ENCODE measurements at regions of chr7 and their contacts with region 1.

Region 1: DNA sequence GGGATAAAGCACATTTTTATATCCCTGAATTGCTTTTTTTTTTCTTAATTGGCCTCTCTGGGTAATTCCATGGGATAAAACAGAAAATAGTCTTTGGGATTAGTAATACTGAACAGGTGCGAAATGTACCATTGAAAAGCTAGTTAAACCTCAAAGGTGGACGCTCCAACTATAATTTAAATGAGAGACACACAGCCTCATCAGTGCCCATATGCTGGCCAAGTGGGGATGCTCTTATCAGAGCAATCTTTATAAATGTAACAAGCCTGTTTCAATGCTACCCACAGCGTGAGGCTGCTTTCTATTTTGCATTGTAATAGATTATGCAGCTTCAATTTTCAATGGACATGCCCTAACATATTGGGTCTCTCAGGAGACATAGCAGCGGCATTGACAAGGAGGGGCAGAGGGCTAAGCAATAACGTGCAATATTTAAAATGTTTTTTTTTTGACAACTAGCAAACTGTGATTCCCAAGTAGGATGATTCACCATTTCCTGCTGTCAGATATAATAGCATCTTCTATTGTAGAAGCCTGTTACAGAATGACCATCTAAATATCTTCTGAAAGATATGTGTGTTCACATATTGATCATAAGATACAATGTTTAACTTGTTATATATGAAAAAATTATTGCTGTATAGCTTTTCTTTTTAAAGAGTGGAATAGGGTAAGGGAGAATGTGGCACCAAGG is 91.3 kb upstream of the BET1 start:
- DNase-seq: no peak
- H3K4me3 ChIP-seq: no peak overlapping the region
- H3K27ac ChIP-seq: no peak overlapping the region
- H3K4me1 ChIP-seq: no peaks in the 10 kb centered on the region
- H3K27me3 ChIP-seq: no peaks in the 10 kb centered on the region
- CTCF ChIP-seq: no peak
- POLR2A ChIP-seq: no peak

Region 2: GRCh38 chr7:93890464-93891068 is 204.9 kb before region 1 on chr7 and contains the start of gene TFPI2:
- intact Hi-C with region 1: loop called (anchors 10 kb)
- DNase-seq: peak; percentile 72
- H3K4me3 ChIP-seq: peak within 1 kb of the TSS; percentile 47 to 70 (median 54)
- H3K27ac ChIP-seq: peak within 1 kb of the TSS in 1 of 8 donors; percentile 26
- H3K4me1 ChIP-seq: peaks cover 0 to 17% (median 14%) of the 10 kb centered on the region in 6 donors
- H3K27me3 ChIP-seq: peaks cover 0 to 43% (median 18%) of the 10 kb centered on the region in 7 donors
- CTCF ChIP-seq: no peak
- POLR2A ChIP-seq: no peak
- total RNA-seq, gene TFPI2: 0.92 to 6.3 (median 1.9) TPM